Transverse colon (tissue), 4 donors: ENCODE measurements at regions of chr11 and their contacts with region 1.

Region 1: DNA sequence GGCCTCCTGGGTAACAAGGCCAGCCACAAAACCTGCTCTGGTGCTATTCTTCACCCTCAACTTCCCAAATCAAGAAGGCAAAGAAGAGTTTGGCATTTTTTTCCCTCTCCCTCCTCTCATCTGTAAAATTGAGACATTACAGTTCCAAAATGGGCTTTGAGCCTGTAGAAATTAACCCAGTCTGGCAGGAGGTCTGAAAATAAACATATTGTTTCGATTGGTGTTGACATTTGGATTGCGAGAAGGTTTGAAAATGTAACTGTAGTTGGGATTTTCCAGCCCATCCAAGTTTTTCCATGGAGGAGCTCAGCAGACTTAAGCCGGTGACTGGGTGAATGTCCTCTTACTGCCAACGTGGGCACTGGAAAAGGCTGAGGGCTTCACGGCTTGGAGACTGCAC is 35.0 kb upstream of the ALX4 start:
- DNase-seq: no peak
- H3K4me3 ChIP-seq: no peak overlapping the region
- H3K27ac ChIP-seq: no peak overlapping the region
- H3K4me1 ChIP-seq: no peaks in the 10 kb centered on the region
- H3K27me3 ChIP-seq: peaks cover 7% of the 10 kb centered on the region
- CTCF ChIP-seq: no peak
- EP300 ChIP-seq: no peak
- POLR2A ChIP-seq: no peak

Region 2: DNA sequence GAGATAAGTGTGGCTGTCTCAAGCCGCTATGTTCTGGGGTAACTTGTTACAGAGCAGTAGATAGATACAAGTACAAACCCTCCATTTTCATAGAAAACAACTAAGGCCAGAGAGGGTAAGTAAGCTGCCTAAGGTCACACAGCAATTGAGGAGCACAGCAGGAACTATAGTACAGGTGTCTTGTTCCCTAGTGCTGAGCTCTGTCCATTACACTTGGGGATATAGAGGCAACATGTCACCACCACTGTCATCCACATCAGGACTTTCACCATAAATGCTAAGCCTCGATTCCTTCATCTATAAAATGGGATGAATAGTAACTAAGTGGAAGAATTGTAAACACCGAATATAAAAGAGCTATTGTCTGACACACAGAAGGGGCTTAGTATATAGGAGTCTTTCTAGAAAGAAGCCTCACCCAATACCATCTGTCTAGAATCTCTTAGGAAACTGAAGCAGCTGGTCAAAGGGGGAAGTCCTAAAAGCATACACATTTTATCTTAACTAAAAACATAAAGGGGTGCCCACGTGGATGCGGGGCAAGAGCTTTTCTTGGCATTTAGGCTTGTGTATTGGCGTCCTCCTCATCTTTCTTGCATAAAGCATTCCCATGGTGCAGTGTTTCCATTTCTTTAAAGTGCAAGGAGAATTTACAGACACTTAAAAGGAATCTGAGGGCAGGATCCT is 58.8 kb after region 1 on chr11:
- in situ Hi-C with region 1: no loop called
- intact Hi-C with region 1: loop called (anchors 1 kb)
- DNase-seq: no peak
- H3K4me3 ChIP-seq: no peak overlapping the region
- H3K27ac ChIP-seq: no peak overlapping the region
- H3K4me1 ChIP-seq: no peaks in the 10 kb centered on the region
- H3K27me3 ChIP-seq: no peaks in the 10 kb centered on the region
- CTCF ChIP-seq: no peak
- EP300 ChIP-seq: no peak
- POLR2A ChIP-seq: no peak